ENCODE measurements at regions of chr10 and their contacts with region 1.

Region 1: GRCh38 chr10:66058594-66058993 is 867.2 kb upstream of the LRRTM3 start:
- DNase-seq: no peak
- ATAC-seq: no peak
- H3K4me3 ChIP-seq: no peak overlapping the region
- H3K27ac ChIP-seq: no peak overlapping the region
- H3K4me1 ChIP-seq: no peaks in the 10 kb centered on the region
- H3K27me3 ChIP-seq: no peaks in the 10 kb centered on the region
- CTCF ChIP-seq: no peak
- POLR2A ChIP-seq: no peak
- RAD21 ChIP-seq: no peak

Region 2: DNA sequence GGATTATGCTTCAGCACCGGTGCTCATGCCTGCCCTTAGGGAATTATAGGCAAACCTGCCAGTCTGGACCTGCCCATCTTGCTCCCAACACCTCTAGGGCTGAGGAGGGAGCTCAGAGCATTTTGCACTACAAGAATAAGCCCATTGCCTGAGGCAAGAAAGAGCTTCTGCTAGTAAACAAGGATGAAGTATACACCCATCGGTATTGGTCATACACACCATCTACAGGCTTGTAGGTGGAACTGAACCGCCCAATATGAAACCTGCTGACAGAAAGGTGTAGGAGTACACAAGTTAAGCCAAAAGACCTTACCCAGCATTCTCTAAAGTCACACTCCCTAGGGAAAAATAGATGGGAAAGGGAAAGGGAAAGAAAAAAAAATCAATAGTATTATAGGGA is 89.7 kb before region 1 on chr10:
- CTCF ChIA-PET with region 1: no interaction called
- POLR2A ChIA-PET with region 1: no interaction called
- dilution Hi-C with region 1: no loop called
- in situ Hi-C with region 1: no loop called
- intact Hi-C with region 1: loop called (anchors 10 kb)
- DNase-seq: no peak
- ATAC-seq: no peak
- H3K4me3 ChIP-seq: no peak overlapping the region
- H3K27ac ChIP-seq: no peak overlapping the region
- H3K4me1 ChIP-seq: no peaks in the 10 kb centered on the region
- H3K27me3 ChIP-seq: no peaks in the 10 kb centered on the region
- CTCF ChIP-seq: no peak
- POLR2A ChIP-seq: no peak
- RAD21 ChIP-seq: no peak

Region 3: GRCh38 chr10:66095610-66096009 is 37.0 kb after region 1 on chr10:
- CTCF ChIA-PET with region 1: no interaction called
- POLR2A ChIA-PET with region 1: no interaction called
- dilution Hi-C with region 1: no loop called
- in situ Hi-C with region 1: no loop called
- intact Hi-C with region 1: no loop called
- DNase-seq: no peak
- ATAC-seq: no peak
- H3K4me3 ChIP-seq: no peak overlapping the region
- H3K27ac ChIP-seq: no peak overlapping the region
- H3K4me1 ChIP-seq: no peaks in the 10 kb centered on the region
- H3K27me3 ChIP-seq: no peaks in the 10 kb centered on the region
- CTCF ChIP-seq: no peak
- POLR2A ChIP-seq: no peak
- RAD21 ChIP-seq: no peak